ENCODE measurements at regions of chr11 and their contacts with region 1.

Region 1: GRCh38 chr11:15830741-15831428 is 525.5 kb downstream of the SOX6 start:
- DNase-seq: no peak
- H3K4me3 ChIP-seq: no peak overlapping the region
- H3K27ac ChIP-seq: no peak overlapping the region
- H3K4me1 ChIP-seq: no peaks in the 10 kb centered on the region
- H3K27me3 ChIP-seq: peaks cover 0 to 4% (median 0%) of the 10 kb centered on the region in 5 experiments

Region 2: GRCh38 chr11:15819679-15820286 is 11.1 kb before region 1 on chr11:
- CTCF ChIA-PET with region 1: interaction called, 12 read pairs
- POLR2A ChIA-PET with region 1: interaction called, 3 read pairs
- DNase-seq: peak; percentile 44 to 70 (median 67)
- H3K4me3 ChIP-seq: no peak overlapping the region
- H3K27ac ChIP-seq: no peak overlapping the region
- H3K4me1 ChIP-seq: peaks cover 0 to 16% (median 0%) of the 10 kb centered on the region in 4 experiments
- H3K27me3 ChIP-seq: no peaks in the 10 kb centered on the region

Region 3: DNA sequence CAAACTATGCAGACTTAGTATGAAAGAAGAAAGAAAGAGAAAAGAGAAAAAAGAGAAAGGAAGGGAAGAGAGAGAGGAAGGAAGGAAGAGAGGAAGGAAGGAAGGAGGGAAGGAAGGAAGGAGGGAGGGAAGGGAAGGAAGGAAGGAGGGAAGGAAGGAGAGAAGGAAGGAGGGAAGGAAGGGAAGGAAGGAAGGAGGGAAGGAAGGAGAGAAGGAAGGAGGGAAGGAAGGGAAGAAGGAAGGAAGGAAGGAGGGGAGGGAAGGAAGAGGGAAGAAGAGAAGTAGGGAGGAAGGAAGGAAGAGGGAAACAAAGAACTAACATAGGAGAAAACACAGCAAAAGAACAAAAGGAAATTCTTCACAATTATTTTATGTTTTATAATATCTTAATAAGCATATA is 23.4 kb after region 1 on chr11:
- CTCF ChIA-PET with region 1: no interaction called
- POLR2A ChIA-PET with region 1: no interaction called
- DNase-seq: no peak
- H3K4me3 ChIP-seq: no peak overlapping the region
- H3K27ac ChIP-seq: no peak overlapping the region
- H3K4me1 ChIP-seq: no peaks in the 10 kb centered on the region
- H3K27me3 ChIP-seq: peaks cover 0 to 8% (median 0%) of the 10 kb centered on the region in 5 experiments

Measured in common myeloid progenitor, CD34-positive (primary cell).